PC-9 (cell line): ENCODE measurements at regions of chr6 and their contacts with region 1.

Region 1: DNA sequence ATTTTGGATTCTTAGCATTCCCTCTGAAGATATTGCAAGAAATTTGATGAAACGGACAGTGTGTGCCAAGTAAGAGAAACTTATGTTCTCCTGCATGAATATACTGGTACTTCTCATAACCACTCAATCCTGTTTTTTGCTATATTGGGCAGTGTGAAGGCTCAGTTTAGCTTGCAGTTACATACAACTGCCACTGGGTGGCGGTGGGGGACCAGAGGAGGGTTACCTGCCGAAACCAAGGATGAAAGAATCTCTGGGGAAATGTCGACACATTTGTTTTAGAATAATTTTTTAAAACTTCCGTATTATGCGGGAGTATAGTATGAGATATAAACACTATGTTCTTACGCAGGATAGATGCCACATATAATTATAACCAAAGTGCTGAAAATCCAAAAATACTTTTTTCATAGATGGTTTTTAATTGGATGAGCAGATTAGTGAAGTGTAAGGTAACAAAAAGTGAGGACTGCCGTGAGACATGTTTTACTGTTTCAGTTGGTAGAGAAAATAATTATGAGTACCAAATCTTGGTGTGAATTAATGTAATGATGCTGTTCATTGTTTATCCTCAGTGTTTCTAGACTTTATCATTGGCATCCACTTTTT is 9.7 kb downstream of the TRMT11 start:
- DNase-seq: peak; percentile 61 to 64
- H3K4me3 ChIP-seq: no peak overlapping the region
- H3K27ac ChIP-seq: no peak overlapping the region
- H3K4me1 ChIP-seq: no peaks in the 10 kb centered on the region
- H3K27me3 ChIP-seq: no peaks in the 10 kb centered on the region
- CTCF ChIP-seq: peak; percentile 100

Region 2: DNA sequence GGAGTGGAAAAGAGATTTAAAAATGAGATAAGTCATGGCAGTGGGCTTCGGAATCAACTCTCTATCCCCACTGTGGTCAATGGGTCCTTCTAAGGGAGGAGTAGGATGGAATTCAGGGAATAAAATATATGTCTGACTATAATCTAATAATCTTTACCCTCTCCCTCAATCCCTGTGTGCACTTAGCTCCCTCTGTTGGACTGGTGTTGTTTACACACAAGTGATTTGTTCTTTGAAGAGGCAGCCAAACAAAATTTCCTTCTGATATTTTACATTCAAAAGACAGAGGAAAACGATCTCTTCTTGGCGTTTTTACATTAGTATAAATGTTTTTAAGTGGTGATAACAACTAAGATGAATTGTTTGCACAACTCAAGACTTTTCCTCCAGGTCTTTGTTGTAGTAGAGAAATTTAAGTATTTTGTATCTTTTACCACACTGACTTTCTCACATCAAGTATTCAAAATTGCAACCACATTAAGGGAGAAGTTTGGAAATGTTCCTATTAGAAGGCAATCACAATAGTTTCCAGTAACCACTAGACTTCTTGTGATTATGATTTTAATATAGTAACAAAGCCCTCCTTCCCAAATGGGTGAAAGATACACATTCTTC is 661.6 kb after region 1 on chr6:
- CTCF ChIA-PET with region 1: no interaction called
- POLR2A ChIA-PET with region 1: no interaction called
- intact Hi-C with region 1: loop called (anchors 1 kb)
- DNase-seq: peak; percentile 3 to 48
- H3K4me3 ChIP-seq: no peak overlapping the region
- H3K27ac ChIP-seq: no peak overlapping the region
- H3K4me1 ChIP-seq: no peaks in the 10 kb centered on the region
- H3K27me3 ChIP-seq: no peaks in the 10 kb centered on the region
- CTCF ChIP-seq: peak; percentile 86

Region 3: DNA sequence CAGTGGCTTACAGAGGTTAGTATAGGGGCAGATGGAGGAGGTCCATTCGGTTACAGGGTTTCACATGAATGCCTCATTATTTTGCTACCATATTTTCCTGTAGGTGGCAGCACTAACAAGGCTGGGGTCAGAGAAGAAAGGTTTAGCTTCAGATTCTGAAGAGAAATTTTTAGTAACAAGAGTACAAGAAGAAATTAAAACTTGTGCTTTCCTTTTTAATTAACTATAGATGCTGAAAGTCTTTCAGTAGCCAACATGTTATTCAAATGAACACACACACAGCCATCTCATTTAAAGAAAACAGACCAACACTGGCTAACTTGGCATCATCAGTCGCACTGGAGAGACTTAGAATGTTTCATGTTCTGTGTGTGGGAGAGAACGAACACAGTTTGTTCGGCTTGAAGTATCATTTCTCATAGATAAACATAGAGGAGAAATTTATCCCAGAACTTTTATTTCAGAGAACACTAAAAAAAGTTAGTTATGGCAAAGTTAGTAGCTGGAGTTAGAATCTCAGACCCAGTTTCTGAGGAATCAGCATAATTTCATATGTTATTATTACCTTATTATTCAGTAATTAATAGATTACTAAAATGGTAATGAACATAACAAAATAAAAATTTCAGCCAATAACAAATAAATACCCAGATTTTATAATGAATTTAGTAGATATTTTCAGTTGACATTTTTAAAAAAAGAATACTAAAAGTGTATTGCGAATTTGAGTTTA is 808.4 kb after region 1 on chr6:
- CTCF ChIA-PET with region 1: no interaction called
- POLR2A ChIA-PET with region 1: no interaction called
- intact Hi-C with region 1: loop called (anchors 10 kb)
- DNase-seq: peak in 1 of 2 experiments; percentile 10
- H3K4me3 ChIP-seq: no peak overlapping the region
- H3K27ac ChIP-seq: no peak overlapping the region
- H3K4me1 ChIP-seq: no peaks in the 10 kb centered on the region
- H3K27me3 ChIP-seq: no peaks in the 10 kb centered on the region
- CTCF ChIP-seq: peak; percentile 92

Region 4: GRCh38 chr6:127190552-127190951 is 1194.5 kb after region 1 on chr6:
- CTCF ChIA-PET with region 1: no interaction called
- POLR2A ChIA-PET with region 1: no interaction called
- intact Hi-C with region 1: loop called (anchors 1 kb)
- DNase-seq: no peak
- H3K4me3 ChIP-seq: no peak overlapping the region
- H3K27ac ChIP-seq: no peak overlapping the region
- H3K4me1 ChIP-seq: no peaks in the 10 kb centered on the region
- H3K27me3 ChIP-seq: no peaks in the 10 kb centered on the region
- CTCF ChIP-seq: peak; percentile 81

Region 5: GRCh38 chr6:127266178-127266891 is 1270.3 kb after region 1 on chr6 and contains the start of gene RNF146:
- CTCF ChIA-PET with region 1: interaction called, 10 read pairs
- POLR2A ChIA-PET with region 1: interaction called, 6 read pairs
- intact Hi-C with region 1: no loop called
- DNase-seq: peak; percentile 76 to 77
- H3K4me3 ChIP-seq: peak within 1 kb of the TSS; percentile 65
- H3K27ac ChIP-seq: peak within 1 kb of the TSS; percentile 85
- H3K4me1 ChIP-seq: peaks cover 30% of the 10 kb centered on the region
- H3K27me3 ChIP-seq: no peaks in the 10 kb centered on the region
- CTCF ChIP-seq: peak; percentile 92
- total RNA-seq, gene RNF146: 26.0 and 28.6 TPM in 2 replicates